CD4-positive, alpha-beta memory T cell (primary cell): ENCODE measurements at regions of chr10 and their contacts with region 1.

Region 1: GRCh38 chr10:11335167-11335652 is 276.2 kb downstream of the USP6NL start:
- DNase-seq: no peak
- H3K4me3 ChIP-seq: no peak overlapping the region
- H3K4me3 Mint-ChIP-seq: peak overlapping the region in 2 of 8 donors; percentile 12 to 44
- H3K27ac ChIP-seq: no peak overlapping the region
- H3K27ac Mint-ChIP-seq: peak overlapping the region in 6 of 7 donors; percentile 26 to 87 (median 80)
- H3K4me1 ChIP-seq: no peaks in the 10 kb centered on the region
- H3K4me1 Mint-ChIP-seq: peaks cover 10 to 39% (median 24%) of the 10 kb centered on the region in 4 donors
- H3K27me3 ChIP-seq: no peaks in the 10 kb centered on the region
- H3K27me3 Mint-ChIP-seq: no peaks in the 10 kb centered on the region

Region 2: DNA sequence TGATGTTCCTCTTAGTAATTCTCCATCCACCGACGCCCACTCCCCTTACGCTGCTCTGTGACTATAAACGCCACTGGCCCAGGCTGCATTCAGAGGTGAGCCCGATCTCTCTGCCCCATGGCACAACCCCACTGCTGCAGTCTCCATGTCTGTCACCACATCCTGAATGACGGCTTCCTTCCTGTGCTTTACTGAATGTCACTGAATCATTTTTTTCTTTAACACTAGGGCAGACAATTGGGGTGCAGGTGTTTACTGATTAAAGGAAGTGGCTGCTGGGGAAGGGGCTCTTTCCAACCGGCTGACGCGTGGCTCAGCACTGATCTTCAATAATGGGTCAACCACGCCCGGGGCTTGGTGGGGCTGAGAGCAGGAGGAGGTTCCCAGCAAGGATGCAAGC is 67.9 kb after region 1 on chr10:
- CTCF ChIA-PET with region 1: no interaction called
- POLR2A ChIA-PET with region 1: interaction called, 7 read pairs
- intact Hi-C with region 1: loop called (anchors 5 kb)
- DNase-seq: peak; percentile 78 to 89 (median 84)
- H3K4me3 ChIP-seq: no peak overlapping the region
- H3K4me3 Mint-ChIP-seq: peak overlapping the region; percentile 68 to 88 (median 82)
- H3K27ac ChIP-seq: peak overlapping the region; percentile 34
- H3K27ac Mint-ChIP-seq: peak overlapping the region; percentile 77 to 100 (median 97)
- H3K4me1 ChIP-seq: peaks cover 65% of the 10 kb centered on the region
- H3K4me1 Mint-ChIP-seq: peaks cover 57 to 88% (median 73%) of the 10 kb centered on the region in 4 donors
- H3K27me3 ChIP-seq: no peaks in the 10 kb centered on the region
- H3K27me3 Mint-ChIP-seq: no peaks in the 10 kb centered on the region

Region 3: GRCh38 chr10:11472158-11472753 is 137.0 kb after region 1 on chr10:
- CTCF ChIA-PET with region 1: no interaction called
- POLR2A ChIA-PET with region 1: no interaction called
- intact Hi-C with region 1: loop called (anchors 5 kb)
- DNase-seq: peak; percentile 59 to 70 (median 62)
- H3K4me3 ChIP-seq: no peak overlapping the region
- H3K4me3 Mint-ChIP-seq: no peak overlapping the region
- H3K27ac ChIP-seq: no peak overlapping the region
- H3K27ac Mint-ChIP-seq: no peak overlapping the region
- H3K4me1 ChIP-seq: no peaks in the 10 kb centered on the region
- H3K4me1 Mint-ChIP-seq: peaks cover 0 to 2% (median 0%) of the 10 kb centered on the region in 4 donors
- H3K27me3 ChIP-seq: no peaks in the 10 kb centered on the region
- H3K27me3 Mint-ChIP-seq: peaks cover 0 to 2% of the 10 kb centered on the region in 2 donors

Region 4: GRCh38 chr10:12333380-12334185 is 998.4 kb after region 1 on chr10:
- CTCF ChIA-PET with region 1: no interaction called
- POLR2A ChIA-PET with region 1: no interaction called
- intact Hi-C with region 1: no loop called
- DNase-seq: peak; percentile 16 to 72 (median 21)
- H3K4me3 ChIP-seq: no peak overlapping the region
- H3K4me3 Mint-ChIP-seq: peak overlapping the region in 6 of 8 donors; percentile 15 to 76 (median 42)
- H3K27ac ChIP-seq: no peak overlapping the region
- H3K27ac Mint-ChIP-seq: peak overlapping the region in 6 of 7 donors; percentile 19 to 81 (median 62)
- H3K4me1 ChIP-seq: peaks cover 12% of the 10 kb centered on the region
- H3K4me1 Mint-ChIP-seq: peaks cover 5 to 14% (median 10%) of the 10 kb centered on the region in 4 donors
- H3K27me3 ChIP-seq: no peaks in the 10 kb centered on the region
- H3K27me3 Mint-ChIP-seq: no peaks in the 10 kb centered on the region